GM12878 (cell line): ENCODE measurements at regions of chr7 and their contacts with region 1.

Region 1: DNA sequence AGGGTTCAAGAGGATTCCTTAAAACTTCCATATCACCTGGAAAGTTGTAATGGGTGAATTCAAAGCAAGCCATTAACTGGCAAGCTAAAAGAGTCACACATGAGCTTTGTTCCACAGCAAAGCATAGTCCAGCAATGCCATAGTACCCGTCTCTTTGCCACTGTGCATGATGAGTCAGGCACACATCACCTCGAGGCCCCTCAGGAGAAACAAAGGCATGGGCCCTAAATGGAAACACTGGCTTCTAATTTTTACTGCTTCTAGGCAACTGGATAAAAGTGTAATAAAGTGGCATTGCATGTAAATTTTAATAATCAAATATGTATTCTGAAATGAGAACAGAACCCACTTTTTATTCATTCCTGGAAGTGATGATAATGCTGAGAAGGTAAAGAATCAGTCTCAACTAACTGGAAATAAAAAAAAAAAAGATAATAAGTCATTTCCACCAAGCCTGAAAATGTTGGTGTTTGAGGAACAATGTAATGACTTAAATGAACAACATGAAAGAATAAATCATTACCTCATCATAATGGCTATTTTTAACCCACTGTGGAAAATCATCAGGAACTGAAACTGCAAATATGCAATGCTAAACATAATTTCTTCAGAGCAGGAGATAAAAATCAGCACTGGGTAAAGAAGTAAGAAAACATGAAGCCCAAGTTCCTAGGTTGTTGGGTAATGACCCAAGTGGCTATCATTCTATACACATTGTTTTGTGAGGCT is 104.9 kb downstream of the CDK6 start:
- DNase-seq: no peak
- ATAC-seq: peak; percentile 68
- H3K4me3 ChIP-seq: no peak overlapping the region
- H3K27ac ChIP-seq: peak overlapping the region; percentile 45
- H3K4me1 ChIP-seq: peaks cover 14% of the 10 kb centered on the region
- H3K27me3 ChIP-seq: no peaks in the 10 kb centered on the region
- CTCF ChIP-seq: no peak
- EP300 ChIP-seq: peak; percentile 29 to 45; a peak in 1 of 4 replicates
- POLR2A ChIP-seq: no peak
- RAD21 ChIP-seq: no peak

Region 2: DNA sequence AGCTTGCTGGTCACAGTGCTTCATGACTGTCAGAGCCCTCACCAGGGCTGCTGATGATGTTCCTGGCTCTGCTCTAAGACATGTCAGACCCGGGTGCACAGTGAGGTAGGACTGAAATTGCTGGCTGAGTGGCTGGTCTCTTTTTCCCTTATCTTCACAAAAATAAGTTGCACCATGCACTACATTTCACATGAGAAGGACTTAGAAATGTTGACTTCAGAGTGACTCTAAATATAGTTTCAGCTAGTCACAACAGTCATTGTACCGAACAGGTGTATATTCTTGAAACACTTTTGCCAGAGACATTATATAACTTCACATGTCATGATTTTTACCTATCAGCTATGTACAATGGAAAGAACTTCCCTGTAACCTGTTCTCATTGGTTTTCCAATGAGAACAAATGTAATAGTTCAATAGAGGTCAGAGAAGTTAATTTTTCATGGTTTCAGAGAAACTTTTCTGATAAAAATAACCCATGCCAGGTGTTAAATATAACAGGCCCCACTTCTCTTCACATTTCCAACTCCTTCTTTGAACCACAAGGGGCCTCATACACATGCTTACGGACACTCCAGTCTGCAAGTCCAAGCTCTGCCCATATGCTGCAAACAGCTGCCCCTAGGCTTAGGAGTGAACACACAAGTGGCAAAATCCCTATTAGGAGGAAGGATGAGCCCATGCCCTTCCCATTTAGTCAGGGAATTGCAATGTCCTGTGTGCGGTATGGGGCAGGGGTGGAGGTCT is 10.7 kb before region 1 on chr7:
- CTCF ChIA-PET with region 1: interaction called, 4 read pairs
- POLR2A ChIA-PET with region 1: interaction called, 4 read pairs
- RAD21 ChIA-PET with region 1: no interaction called
- SMC1A ChIA-PET with region 1: interaction called, 11 read pairs
- in situ Hi-C with region 1: no loop called
- intact Hi-C with region 1: no loop called
- DNase-seq: no peak
- ATAC-seq: peak; percentile 79
- H3K4me3 ChIP-seq: no peak overlapping the region
- H3K27ac ChIP-seq: peak overlapping the region; percentile 67
- H3K4me1 ChIP-seq: peaks cover 31% of the 10 kb centered on the region
- H3K27me3 ChIP-seq: no peaks in the 10 kb centered on the region
- CTCF ChIP-seq: peak in 1 of 3 experiments; percentile 21; a peak in 2 of 6 replicates
- EP300 ChIP-seq: 0 out of 4 replicates have a peak, but pooled peaks of 1 of the 2 experiments have one; percentile 17
- POLR2A ChIP-seq: no peak
- RAD21 ChIP-seq: peak; percentile 65